CD8-positive, alpha-beta memory T cell (primary cell): ENCODE measurements at regions of chr14 and their contacts with region 1.

Region 1: DNA sequence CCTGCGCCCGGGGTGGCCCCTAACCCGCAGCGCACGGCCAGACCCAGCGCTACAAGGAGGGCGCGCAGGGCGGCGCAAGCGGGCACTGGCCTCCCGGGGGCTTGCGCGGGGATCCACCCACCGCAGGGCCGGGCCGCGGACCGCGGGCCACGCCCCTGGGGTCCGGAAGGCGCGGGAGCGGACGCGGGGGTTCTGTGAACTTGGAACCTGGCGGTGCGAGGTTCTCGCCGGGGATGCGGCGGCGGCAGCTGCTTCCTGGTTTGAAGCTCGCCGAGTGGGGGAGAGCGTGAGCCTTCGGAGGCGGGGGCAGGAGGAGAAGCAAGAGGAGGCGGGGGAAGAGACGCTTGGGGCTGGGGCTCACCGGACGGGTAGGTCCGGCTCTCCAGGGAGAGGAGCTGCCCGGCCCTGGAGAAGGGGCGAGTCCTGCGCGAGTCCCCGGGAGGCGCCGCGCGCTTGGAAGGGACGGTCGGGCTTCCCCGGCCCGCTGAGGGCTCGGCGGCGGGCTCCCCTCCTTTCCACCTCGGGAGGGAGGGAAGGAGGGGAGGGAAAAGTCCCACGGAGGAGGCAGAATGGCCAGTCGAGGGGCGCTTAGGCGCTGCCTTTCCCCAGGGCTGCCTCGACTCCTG is at the start of gene PRKCH:
- DNase-seq: peak; percentile 73 to 92 (median 82)
- H3K4me3 ChIP-seq: peak within 1 kb of the TSS; percentile 76
- H3K4me3 Mint-ChIP-seq: peak within 1 kb of the TSS in 6 of 7 donors; percentile 98 to 100 (median 98)
- H3K27ac ChIP-seq: peak within 1 kb of the TSS; percentile 75
- H3K27ac Mint-ChIP-seq: peak within 1 kb of the TSS in 7 of 8 donors; percentile 91 to 100 (median 96)
- H3K4me1 ChIP-seq: peaks cover 19% of the 10 kb centered on the region
- H3K4me1 Mint-ChIP-seq: peaks cover 22 to 28% (median 26%) of the 10 kb centered on the region in 3 donors
- H3K27me3 ChIP-seq: no peaks in the 10 kb centered on the region
- H3K27me3 Mint-ChIP-seq: no peaks in the 10 kb centered on the region
- total RNA-seq, gene PRKCH: 165 to 166 TPM

Region 2: GRCh38 chr14:61147831-61148549 is 173.5 kb before region 1 on chr14:
- CTCF ChIA-PET with region 1: no interaction called
- POLR2A ChIA-PET with region 1: no interaction called
- DNase-seq: no peak
- H3K4me3 ChIP-seq: no peak overlapping the region
- H3K4me3 Mint-ChIP-seq: no peak overlapping the region
- H3K27ac ChIP-seq: no peak overlapping the region
- H3K27ac Mint-ChIP-seq: no peak overlapping the region
- H3K4me1 ChIP-seq: no peaks in the 10 kb centered on the region
- H3K4me1 Mint-ChIP-seq: no peaks in the 10 kb centered on the region
- H3K27me3 ChIP-seq: no peaks in the 10 kb centered on the region
- H3K27me3 Mint-ChIP-seq: peaks cover 7 to 14% of the 10 kb centered on the region in 2 donors

Region 3: GRCh38 chr14:61342486-61342885 is 21.0 kb after region 1 on chr14:
- CTCF ChIA-PET with region 1: interaction called, 12 read pairs
- POLR2A ChIA-PET with region 1: interaction called, 8 read pairs
- DNase-seq: peak; percentile 74 to 94 (median 90)
- H3K4me3 ChIP-seq: peak overlapping the region; percentile 22
- H3K4me3 Mint-ChIP-seq: peak overlapping the region; percentile 77 to 90 (median 82)
- H3K27ac ChIP-seq: peak overlapping the region; percentile 33
- H3K27ac Mint-ChIP-seq: peak overlapping the region; percentile 96 to 99 (median 98)
- H3K4me1 ChIP-seq: peaks cover 92% of the 10 kb centered on the region
- H3K4me1 Mint-ChIP-seq: peaks cover 95 to 97% (median 97%) of the 10 kb centered on the region in 3 donors
- H3K27me3 ChIP-seq: no peaks in the 10 kb centered on the region
- H3K27me3 Mint-ChIP-seq: no peaks in the 10 kb centered on the region

Region 4: GRCh38 chr14:61388173-61388975 is 66.9 kb after region 1 on chr14:
- CTCF ChIA-PET with region 1: interaction called, 12 read pairs
- POLR2A ChIA-PET with region 1: interaction called, 8 read pairs
- DNase-seq: peak; percentile 24 to 72 (median 53)
- H3K4me3 ChIP-seq: peak overlapping the region; percentile 34
- H3K4me3 Mint-ChIP-seq: peak overlapping the region in 2 of 7 donors; percentile 61 to 72
- H3K27ac ChIP-seq: peak overlapping the region; percentile 44
- H3K27ac Mint-ChIP-seq: no peak overlapping the region
- H3K4me1 ChIP-seq: peaks cover 99% of the 10 kb centered on the region
- H3K4me1 Mint-ChIP-seq: no peaks in the 10 kb centered on the region
- H3K27me3 ChIP-seq: no peaks in the 10 kb centered on the region
- H3K27me3 Mint-ChIP-seq: no peaks in the 10 kb centered on the region

Region 5: GRCh38 chr14:61403411-61403810 is 81.9 kb after region 1 on chr14:
- CTCF ChIA-PET with region 1: interaction called, 11 read pairs
- POLR2A ChIA-PET with region 1: interaction called, 4 read pairs
- DNase-seq: peak in 2 of 5 donors; percentile 60 to 64
- H3K4me3 ChIP-seq: no peak overlapping the region
- H3K4me3 Mint-ChIP-seq: peak overlapping the region; percentile 15 to 76 (median 69)
- H3K27ac ChIP-seq: no peak overlapping the region
- H3K27ac Mint-ChIP-seq: peak overlapping the region; percentile 36 to 95 (median 90)
- H3K4me1 ChIP-seq: peaks cover 89% of the 10 kb centered on the region
- H3K4me1 Mint-ChIP-seq: peaks cover 40 to 89% (median 56%) of the 10 kb centered on the region in 3 donors
- H3K27me3 ChIP-seq: no peaks in the 10 kb centered on the region
- H3K27me3 Mint-ChIP-seq: no peaks in the 10 kb centered on the region

Region 6: DNA sequence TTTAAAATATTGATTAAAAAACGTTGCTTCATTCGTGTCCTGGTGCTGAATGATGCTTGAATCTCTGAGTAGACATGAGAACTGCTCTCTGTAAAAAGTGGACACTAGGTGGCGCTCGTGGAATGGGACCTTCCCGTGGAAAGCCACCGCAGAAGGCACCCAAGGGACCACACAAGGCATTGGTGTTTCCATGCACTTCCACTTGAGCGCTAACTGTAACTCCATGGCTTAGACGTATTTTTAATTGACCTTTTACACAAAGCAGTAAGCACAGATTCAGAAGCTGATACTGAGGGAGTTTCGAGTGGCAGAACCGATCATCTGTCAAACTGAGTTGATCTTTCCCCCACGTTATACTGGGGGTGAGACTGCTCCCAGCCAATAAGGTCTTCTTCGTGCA is 135.2 kb after region 1 on chr14:
- CTCF ChIA-PET with region 1: interaction called, 14 read pairs
- POLR2A ChIA-PET with region 1: interaction called, 10 read pairs
- DNase-seq: peak; percentile 72 to 87 (median 77)
- H3K4me3 ChIP-seq: no peak overlapping the region
- H3K4me3 Mint-ChIP-seq: peak overlapping the region in 2 of 7 donors; percentile 34 to 64
- H3K27ac ChIP-seq: no peak overlapping the region
- H3K27ac Mint-ChIP-seq: peak overlapping the region; percentile 81 to 94 (median 91)
- H3K4me1 ChIP-seq: peaks cover 64% of the 10 kb centered on the region
- H3K4me1 Mint-ChIP-seq: peaks cover 80 to 93% (median 87%) of the 10 kb centered on the region in 3 donors
- H3K27me3 ChIP-seq: no peaks in the 10 kb centered on the region
- H3K27me3 Mint-ChIP-seq: peaks cover 0 to 11% of the 10 kb centered on the region in 2 donors